ENCODE measurements at regions of chr10 and their contacts with region 1.

Region 1: DNA sequence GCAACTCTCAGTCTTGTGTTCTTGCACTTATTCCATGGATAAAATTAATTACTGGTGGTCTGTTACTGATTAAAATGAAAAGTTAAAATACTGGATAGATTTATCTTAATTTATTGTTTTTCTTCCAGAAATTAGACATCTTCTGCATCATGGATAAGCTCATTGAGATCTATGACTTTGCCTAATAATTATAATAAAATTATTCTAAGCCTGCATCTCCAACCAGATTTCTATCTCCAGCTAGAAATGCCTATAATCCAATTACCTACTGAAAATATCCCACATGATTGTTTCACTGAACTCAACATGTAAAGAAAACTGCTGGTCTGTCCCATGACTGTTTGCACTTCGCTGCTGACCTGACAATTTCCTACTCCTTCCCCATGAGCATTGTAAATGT is 88.3 kb upstream of the ACBD5 start:
- DNase-seq: no peak
- ATAC-seq: no peak
- H3K4me3 ChIP-seq: no peak overlapping the region
- H3K4me3 Mint-ChIP-seq: no peak overlapping the region
- H3K27ac ChIP-seq: no peak overlapping the region
- H3K27ac Mint-ChIP-seq: no peak overlapping the region
- H3K4me1 ChIP-seq: no peaks in the 10 kb centered on the region
- H3K4me1 Mint-ChIP-seq: no peaks in the 10 kb centered on the region
- H3K27me3 ChIP-seq: no peaks in the 10 kb centered on the region
- H3K27me3 Mint-ChIP-seq: peaks cover 2 to 5% of the 10 kb centered on the region in 2 donors

Region 2: GRCh38 chr10:27188259-27188658 is 140.7 kb before region 1 on chr10:
- CTCF ChIA-PET with region 1: interaction called in 1 of 2 experiments, 3 read pairs
- POLR2A ChIA-PET with region 1: interaction called in 1 of 2 experiments, 11 read pairs
- DNase-seq: no peak
- ATAC-seq: no peak
- H3K4me3 ChIP-seq: no peak overlapping the region
- H3K4me3 Mint-ChIP-seq: no peak overlapping the region
- H3K27ac ChIP-seq: no peak overlapping the region
- H3K27ac Mint-ChIP-seq: no peak overlapping the region
- H3K4me1 ChIP-seq: no peaks in the 10 kb centered on the region
- H3K4me1 Mint-ChIP-seq: no peaks in the 10 kb centered on the region
- H3K27me3 ChIP-seq: no peaks in the 10 kb centered on the region
- H3K27me3 Mint-ChIP-seq: no peaks in the 10 kb centered on the region

Region 3: DNA sequence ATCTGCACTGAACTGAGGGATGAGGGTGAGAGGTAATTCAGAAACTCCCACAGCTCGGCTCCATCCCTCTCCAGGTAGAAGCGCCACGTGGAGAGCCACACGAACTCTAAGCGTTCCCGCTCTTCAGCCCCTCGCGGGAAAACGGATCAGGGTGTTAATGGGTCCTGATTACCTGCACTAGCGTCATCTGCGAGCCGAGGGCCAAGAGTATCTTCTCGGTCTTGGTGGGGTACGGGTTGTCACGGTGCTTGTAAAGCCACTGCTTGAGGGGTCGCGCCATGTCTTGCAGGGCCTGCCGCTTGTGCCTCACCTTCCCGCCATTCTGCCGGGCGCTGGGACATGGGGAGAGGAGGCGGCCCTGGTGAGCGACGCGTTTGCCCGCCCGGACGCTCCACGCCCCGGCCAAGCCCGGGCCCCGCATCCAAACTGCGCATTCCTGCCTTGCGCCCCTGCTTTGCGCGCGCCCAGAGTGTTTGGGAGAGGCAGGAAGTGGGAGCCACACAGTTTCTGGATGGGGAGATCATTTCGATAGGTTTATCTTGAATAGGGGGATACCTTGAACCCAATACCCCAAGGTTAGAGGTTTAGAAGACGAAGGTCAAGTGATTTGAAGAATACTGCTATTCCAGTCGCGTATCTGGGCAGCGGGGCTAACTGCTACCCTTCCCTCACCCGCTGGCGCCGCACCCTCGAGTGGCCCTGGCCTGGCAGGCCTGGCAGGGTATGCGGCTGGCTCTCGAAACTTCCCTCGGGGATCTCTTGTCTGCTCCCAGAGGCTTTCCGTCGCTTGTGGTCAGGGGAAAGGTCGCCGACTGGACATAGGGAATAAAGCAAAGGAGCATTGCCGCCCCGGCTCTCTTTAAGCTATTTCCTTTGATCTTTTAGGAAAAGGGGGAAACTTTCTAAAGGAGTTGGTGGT is 412.5 kb after region 1 on chr10:
- CTCF ChIA-PET with region 1: no interaction called
- POLR2A ChIA-PET with region 1: no interaction called
- DNase-seq: peak in 4 of 35 experiments; percentile 1 to 6 (median 4)
- ATAC-seq: no peak
- H3K4me3 ChIP-seq: peak overlapping the region; percentile 63 to 94
- H3K4me3 Mint-ChIP-seq: peak overlapping the region; percentile 72 to 82 (median 75)
- H3K27ac ChIP-seq: no peak overlapping the region
- H3K27ac Mint-ChIP-seq: no peak overlapping the region
- H3K4me1 ChIP-seq: peaks cover 18 to 49% of the 10 kb centered on the region in 2 experiments
- H3K4me1 Mint-ChIP-seq: peaks cover 24 to 33% (median 27%) of the 10 kb centered on the region in 3 donors
- H3K27me3 ChIP-seq: peaks cover 9 to 58% of the 10 kb centered on the region in 2 experiments
- H3K27me3 Mint-ChIP-seq: peaks cover 46 to 57% of the 10 kb centered on the region in 2 donors

Region 4: DNA sequence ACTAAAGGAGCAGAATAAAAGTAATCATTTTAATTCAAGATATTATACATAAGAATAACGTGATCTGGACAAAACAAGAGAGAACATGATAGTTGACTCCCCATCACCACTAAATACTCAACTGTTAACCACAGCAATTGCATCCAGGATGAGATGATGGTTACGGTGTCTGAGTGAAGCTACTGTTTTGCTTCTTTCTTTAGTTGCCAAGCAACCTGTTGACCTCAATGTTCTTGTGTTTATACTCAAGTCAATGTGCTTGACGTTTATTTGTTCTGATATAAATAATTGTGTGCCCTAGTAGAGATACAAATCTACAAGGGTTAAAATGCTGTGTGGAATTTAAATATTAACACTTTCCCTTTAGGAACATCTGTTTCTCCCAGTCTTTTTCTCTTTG is 1005.4 kb after region 1 on chr10:
- CTCF ChIA-PET with region 1: no interaction called
- POLR2A ChIA-PET with region 1: no interaction called
- DNase-seq: peak in 29 of 35 experiments; percentile 3 to 95 (median 52)
- ATAC-seq: peak; percentile 69 to 78 (median 74)
- H3K4me3 ChIP-seq: peak overlapping the region; percentile 55 to 62
- H3K4me3 Mint-ChIP-seq: peak overlapping the region; percentile 91 to 92 (median 92)
- H3K27ac ChIP-seq: peak overlapping the region; percentile 97
- H3K27ac Mint-ChIP-seq: peak overlapping the region; percentile 99 to 100
- H3K4me1 ChIP-seq: peaks cover 33 to 61% of the 10 kb centered on the region in 2 experiments
- H3K4me1 Mint-ChIP-seq: peaks cover 64 to 84% (median 67%) of the 10 kb centered on the region in 3 donors
- H3K27me3 ChIP-seq: no peaks in the 10 kb centered on the region
- H3K27me3 Mint-ChIP-seq: no peaks in the 10 kb centered on the region